ENCODE measurements at regions of chr2 and their contacts with region 1.

Region 1: DNA sequence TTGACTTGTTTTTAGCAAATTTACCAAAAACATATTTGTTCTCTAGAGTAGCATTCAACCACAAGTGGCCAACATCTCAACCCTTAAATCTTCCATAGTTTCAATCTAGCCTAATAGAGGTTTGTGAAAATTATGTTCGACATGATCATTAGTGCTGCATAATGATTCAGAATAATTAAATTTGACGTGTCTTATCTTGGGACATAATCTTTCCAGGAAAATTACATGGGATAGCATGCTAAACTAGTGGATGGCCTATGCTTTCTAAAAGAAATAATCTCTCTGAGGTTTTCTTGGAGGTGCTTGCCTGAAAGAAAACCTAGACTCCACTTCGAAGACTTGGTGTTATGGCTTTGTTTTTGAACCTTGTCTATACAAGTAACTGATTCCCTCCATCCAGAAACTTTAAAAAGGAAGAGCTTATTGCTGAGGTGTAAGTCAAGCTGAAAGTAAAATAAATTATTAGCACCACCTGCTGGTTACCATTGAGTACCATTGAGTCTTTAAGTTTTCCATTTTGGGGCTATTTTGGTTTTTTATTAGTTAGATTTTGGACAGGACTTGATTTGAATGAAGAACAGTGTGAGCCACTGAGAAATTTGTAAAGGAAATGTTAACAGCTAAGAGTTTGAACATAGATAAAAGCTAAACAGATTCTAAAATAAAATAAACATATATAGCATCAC is 32.7 kb downstream of the COX7A2L start:
- DNase-seq: no peak
- H3K4me3 ChIP-seq: no peak overlapping the region
- CTCF ChIP-seq: peak; percentile 8

Region 2: GRCh38 chr2:42314892-42315467 is 13.3 kb before region 1 on chr2:
- CTCF ChIA-PET with region 1: interaction called, 14 read pairs
- POLR2A ChIA-PET with region 1: no interaction called
- DNase-seq: peak; percentile 87
- H3K4me3 ChIP-seq: no peak overlapping the region
- CTCF ChIP-seq: no peak

Region 3: DNA sequence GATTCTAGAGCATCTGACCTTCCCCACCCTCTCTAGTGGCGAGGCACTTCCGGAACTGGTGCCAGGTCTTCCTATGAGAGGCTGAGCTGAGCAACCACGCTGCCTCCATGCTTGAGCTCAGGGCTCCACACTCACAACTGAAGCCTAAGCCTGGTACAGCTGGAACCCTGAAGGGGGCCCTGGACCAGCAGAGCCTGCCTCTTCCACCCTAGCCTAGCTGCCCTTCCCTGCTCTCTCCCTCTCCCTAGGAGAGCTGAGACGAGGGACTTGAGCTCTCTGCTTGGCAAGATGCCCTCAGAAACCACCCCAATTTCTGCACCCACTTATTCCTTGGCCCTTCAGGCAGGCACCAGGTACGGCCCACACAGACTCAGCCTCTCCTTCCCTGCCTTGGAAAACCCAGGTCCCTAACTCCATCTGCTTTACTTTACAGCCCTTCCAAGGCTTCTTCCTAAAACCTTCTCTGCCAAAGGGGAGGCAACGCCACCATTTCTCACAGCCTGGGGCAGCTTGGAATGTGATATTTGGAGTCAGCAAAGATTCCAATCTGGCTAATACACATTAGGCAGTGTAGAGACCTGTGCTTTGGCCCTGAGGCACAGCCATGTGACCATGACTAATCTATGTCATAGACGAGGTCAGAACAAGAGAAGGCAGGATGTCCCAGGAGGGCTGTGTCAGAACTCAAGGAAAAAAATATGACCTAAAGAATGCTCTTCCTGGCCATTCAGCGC is 13.9 kb after region 1 on chr2:
- CTCF ChIA-PET with region 1: interaction called, 26 read pairs
- POLR2A ChIA-PET with region 1: no interaction called
- DNase-seq: peak; percentile 70
- H3K4me3 ChIP-seq: no peak overlapping the region
- CTCF ChIP-seq: no peak